ENCODE measurements at regions of chr3 and their contacts with region 1.

Region 1: GRCh38 chr3:43690400-43691119 is at the start of gene ABHD5:
- DNase-seq: peak; percentile 91
- H3K4me3 Mint-ChIP-seq: peak within 1 kb of the TSS; percentile 92
- H3K27ac Mint-ChIP-seq: peak within 1 kb of the TSS; percentile 92
- H3K4me1 Mint-ChIP-seq: peaks cover 39% of the 10 kb centered on the region
- H3K27me3 Mint-ChIP-seq: peaks cover 2% of the 10 kb centered on the region
- total RNA-seq, gene ABHD5: 20.2 and 20.4 TPM in 2 replicates

Region 2: DNA sequence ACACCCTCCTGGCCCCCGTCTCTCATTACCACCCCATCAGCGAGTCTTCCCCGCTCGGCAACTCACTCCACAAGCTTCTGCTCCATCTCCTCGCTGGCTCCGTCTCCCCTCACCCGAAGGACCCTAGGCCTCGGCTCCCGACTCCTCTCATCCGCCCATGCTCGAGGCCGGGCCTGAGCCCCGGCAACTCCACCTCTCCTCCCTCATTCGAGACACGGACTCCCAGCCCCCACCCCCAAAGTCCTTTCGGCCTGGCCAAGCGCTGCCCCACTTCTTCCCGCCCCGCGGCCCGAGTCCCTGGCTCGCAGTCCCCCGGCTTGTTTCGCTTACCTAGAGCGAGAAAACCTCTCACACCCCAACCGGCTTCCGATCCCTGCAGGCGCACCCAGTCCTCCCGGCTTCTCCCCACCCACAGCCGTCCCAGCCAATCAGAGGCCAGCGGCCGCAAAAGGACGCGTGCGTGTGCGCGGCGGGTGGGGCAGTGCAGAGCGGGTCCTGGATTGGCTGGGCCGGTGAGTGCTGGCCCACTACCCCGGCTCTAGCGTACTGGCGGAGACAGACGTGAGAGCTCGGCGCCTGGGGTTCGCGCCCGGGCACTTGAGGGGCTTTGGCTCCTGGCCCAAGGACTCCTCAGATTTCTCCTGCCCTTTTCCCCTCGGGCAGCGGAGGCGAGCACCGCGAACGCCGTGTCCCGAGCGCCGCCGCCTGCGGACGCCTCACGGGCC is 886.3 kb before region 1 on chr3 and contains the start of gene HIGD1A:
- intact Hi-C with region 1: loop called (anchors 2 kb)
- DNase-seq: peak; percentile 92
- H3K4me3 Mint-ChIP-seq: peak within 1 kb of the TSS; percentile 99
- H3K27ac Mint-ChIP-seq: peak within 1 kb of the TSS; percentile 90
- H3K4me1 Mint-ChIP-seq: peaks cover 43% of the 10 kb centered on the region
- H3K27me3 Mint-ChIP-seq: peaks cover 27% of the 10 kb centered on the region
- total RNA-seq, gene HIGD1A: 90.1 and 97.5 TPM in 2 replicates

Region 3: GRCh38 chr3:43345877-43346276 is 344.7 kb before region 1 on chr3:
- intact Hi-C with region 1: loop called (anchors 5 kb)
- DNase-seq: no peak
- H3K4me3 Mint-ChIP-seq: peak overlapping the region; percentile 63
- H3K27ac Mint-ChIP-seq: peak overlapping the region; percentile 86
- H3K4me1 Mint-ChIP-seq: peaks cover 80% of the 10 kb centered on the region
- H3K27me3 Mint-ChIP-seq: no peaks in the 10 kb centered on the region

Region 4: DNA sequence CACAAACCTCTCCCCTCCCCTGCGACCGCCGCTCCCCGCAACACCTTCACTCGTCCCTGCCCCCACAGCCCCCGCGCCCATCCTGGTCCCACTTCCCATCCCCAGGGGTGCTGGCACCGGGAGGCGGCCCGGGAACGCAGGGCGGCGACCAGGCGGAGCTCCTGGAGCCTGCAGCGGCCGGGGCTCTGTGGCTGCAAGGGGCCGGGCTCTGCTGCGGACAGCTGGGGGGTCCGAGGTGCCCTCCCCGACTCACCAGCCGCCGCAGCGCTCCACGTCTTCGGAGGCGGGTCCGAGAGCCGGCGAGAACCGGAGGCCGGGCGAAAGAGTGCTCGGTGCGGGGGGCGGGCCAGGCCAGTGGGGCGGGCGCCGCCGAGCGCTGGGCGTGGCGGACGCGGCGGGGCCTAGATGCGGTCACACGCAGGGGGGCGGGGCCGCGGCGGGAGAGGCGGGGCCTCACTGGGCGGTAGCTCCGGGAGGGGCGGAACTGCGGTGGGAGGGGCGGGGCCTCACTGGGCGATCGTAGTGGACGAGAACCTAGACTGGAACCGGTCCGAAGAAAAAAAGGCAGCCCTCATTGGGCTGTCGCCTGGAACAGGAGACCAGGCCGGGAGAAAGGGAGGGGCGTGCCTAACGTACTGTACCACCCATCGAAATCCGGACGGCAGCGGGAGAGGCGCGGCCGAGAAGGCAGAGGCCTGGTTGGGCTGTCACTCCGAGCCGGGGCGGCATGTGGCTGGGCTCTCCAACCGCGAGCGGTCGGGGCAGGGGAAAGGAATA is 68.7 kb before region 1 on chr3 and contains the start of gene ANO10:
- intact Hi-C with region 1: loop called (anchors 1 kb)
- DNase-seq: peak; percentile 90
- H3K4me3 Mint-ChIP-seq: peak within 1 kb of the TSS; percentile 91
- H3K27ac Mint-ChIP-seq: peak within 1 kb of the TSS; percentile 70
- H3K4me1 Mint-ChIP-seq: peaks cover 32% of the 10 kb centered on the region
- H3K27me3 Mint-ChIP-seq: peaks cover 26% of the 10 kb centered on the region
- total RNA-seq, gene ANO10: 4.2 and 4.6 TPM in 2 replicates

Region 5: GRCh38 chr3:43998836-43999727 is 308.5 kb after region 1 on chr3:
- intact Hi-C with region 1: loop called (anchors 5 kb)
- DNase-seq: no peak
- H3K4me3 Mint-ChIP-seq: no peak overlapping the region
- H3K27ac Mint-ChIP-seq: no peak overlapping the region
- H3K4me1 Mint-ChIP-seq: peaks cover 35% of the 10 kb centered on the region
- H3K27me3 Mint-ChIP-seq: peaks cover 75% of the 10 kb centered on the region

Region 6: DNA sequence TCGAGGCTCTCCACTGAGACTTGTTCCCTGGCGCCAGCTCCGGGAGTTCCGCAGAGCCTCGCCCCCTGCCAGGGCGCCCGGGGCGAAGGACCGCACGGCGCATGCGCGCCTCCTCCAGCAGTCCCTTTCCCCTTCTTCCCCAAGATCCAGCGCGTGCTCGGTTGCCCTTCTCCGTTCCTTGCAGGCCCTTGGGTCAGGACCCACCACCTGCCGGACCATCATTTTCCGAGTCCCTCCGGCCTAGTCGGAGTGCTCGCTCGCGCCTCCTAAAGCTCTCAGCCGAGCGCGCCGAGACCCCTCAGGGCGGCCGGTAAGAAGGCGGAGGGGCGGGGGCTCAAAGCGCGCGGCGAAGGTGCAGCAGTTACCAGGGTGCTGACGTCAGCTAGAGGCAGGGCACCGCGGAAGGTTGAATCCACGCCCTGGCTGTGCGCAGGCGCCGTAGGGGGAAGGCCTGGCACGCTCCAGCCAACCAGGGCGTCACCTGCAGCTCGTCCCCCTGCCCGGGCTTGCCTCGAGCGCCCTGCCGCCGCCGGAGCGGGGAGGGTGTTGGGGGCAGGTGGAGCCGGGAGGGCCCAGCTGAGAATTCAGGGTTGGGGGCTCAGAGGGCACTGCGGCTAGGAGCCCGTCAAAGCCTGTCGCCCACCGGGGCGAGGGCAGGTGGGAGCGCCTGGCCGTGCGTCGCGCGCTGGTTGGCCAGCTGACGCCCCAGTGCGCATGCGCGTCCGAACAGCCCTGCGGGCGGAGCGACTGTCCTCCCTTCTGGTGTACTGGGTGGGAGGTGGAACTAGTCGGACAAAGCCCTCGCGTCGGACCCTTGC is 647.7 kb after region 1 on chr3 and contains the start of gene TCAIM:
- intact Hi-C with region 1: loop called (anchors 1 kb)
- DNase-seq: peak; percentile 98
- H3K4me3 Mint-ChIP-seq: peak within 1 kb of the TSS; percentile 98
- H3K27ac Mint-ChIP-seq: peak within 1 kb of the TSS; percentile 97
- H3K4me1 Mint-ChIP-seq: peaks cover 17% of the 10 kb centered on the region
- H3K27me3 Mint-ChIP-seq: peaks cover 4% of the 10 kb centered on the region
- total RNA-seq, gene TCAIM: 13.6 and 14.4 TPM in 2 replicates

Region 7: DNA sequence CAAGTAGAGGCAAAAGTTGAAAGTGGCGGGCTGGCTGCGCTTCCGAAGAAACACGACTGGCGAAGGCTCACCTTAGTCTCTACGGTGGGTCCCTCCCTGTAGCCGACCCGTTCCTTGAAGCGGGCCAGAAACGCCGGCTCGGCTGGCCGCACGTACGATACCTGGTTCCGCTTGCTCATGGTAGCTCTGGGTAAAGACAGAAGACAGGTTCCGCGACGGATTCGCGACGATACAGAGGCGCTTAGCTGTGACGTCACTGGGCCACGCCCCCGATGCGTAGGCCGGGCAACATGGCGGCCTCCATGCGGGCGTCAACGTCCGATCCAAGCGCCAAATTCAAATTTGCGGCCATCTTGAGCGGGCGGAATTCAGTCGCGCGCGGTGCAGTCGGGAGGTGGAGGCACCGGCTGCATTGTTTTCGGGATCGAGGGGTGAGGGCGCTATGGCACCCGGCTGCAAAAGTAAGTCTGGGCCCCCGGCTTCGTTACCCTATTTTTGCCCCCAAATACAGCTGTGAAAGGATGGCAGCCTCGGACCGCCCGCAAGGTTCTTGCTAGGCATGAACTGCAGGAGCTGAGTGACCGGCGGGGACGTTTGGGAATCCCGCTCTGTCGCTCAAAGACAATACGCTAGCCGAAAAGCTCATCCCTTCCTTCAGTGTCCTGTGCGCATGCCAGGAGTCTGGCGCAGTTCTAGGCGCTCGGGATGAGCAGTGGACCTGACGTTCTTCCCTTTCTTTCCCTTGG is 1071.0 kb after region 1 on chr3 and contains the starts of genes KIAA1143 and KIF15:
- intact Hi-C with region 1: loop called (anchors 10 kb)
- DNase-seq: peak; percentile 95
- H3K4me3 Mint-ChIP-seq: peak within 1 kb of the TSS; percentile 93
- H3K27ac Mint-ChIP-seq: peak within 1 kb of the TSS; percentile 90
- H3K4me1 Mint-ChIP-seq: peaks cover 38% of the 10 kb centered on the region
- H3K27me3 Mint-ChIP-seq: peaks cover 4% of the 10 kb centered on the region
- total RNA-seq, gene KIAA1143: 39.2 and 40.4 TPM in 2 replicates
- total RNA-seq, gene KIF15: 23.2 and 25.5 TPM in 2 replicates

Measured in activated T-helper 1 cell treated with anti-CD3 and anti-CD28 coated beads, Interleukin-12 subunit alpha, Interleukin-12 subunit beta, Interleukin-2, Interleukin-4 antibody, amounts not matched to agents 30 ng/mL and 10 ng/mL and 1 ng/mL, durations not matched to agents 14 hours and 24 hours and 36 hours (primary cell).